ENCODE measurements at regions of chr15 and their contacts with region 1.

Region 1: DNA sequence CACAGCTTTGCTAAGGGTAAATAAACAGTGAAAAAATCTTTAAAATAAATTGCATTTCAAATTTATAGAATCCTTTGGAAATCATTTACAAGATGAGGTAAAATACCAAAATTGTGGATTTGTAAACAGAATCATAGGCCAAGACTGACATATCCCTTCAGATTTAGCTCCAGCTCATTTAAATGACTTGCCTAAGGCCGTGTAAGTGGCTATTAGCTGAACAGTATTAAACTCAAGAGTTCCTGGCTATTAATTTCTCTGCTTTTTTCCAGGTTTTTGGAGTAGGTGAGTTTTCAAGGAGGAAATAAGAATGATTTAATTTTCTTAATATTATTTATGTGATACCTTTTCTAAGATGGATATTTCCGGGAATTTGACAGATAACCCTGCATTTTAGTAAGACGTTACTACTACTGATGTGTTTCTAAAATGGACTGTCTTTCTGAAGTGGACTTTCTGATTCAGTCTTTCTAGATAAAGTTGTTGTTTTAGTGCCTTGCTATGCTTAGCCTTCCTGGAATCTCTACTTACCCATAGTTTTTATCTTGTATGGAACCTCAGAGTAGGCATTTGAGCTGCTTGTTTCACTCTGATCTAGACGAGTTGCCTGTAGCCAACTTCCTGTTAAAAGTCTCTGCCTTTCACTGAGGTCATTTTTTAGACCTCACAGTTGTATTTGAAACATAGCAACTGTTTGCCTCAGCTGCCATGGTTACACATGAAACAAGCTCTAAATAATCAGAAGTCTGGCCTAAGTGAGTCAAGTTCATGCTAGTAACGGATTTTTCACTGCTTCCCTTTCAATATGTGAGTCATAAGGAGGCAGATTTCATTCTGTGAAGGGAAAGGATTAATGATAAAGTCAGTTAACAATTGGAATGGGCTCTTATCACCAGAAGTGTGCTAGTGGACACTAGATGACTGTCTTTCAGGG is 127.0 kb downstream of the KLHL25 start:
- DNase-seq: peak in 11 of 14 experiments; percentile 15 to 95 (median 46)
- ATAC-seq: peak; percentile 94
- H3K4me3 ChIP-seq: no peak overlapping the region
- H3K4me3 Mint-ChIP-seq: peak overlapping the region; percentile 57
- H3K27ac ChIP-seq: peak overlapping the region; percentile 68 to 95
- H3K27ac Mint-ChIP-seq: peak overlapping the region; percentile 84
- H3K4me1 ChIP-seq: peaks cover 9% of the 10 kb centered on the region
- H3K4me1 Mint-ChIP-seq: peaks cover 22% of the 10 kb centered on the region
- H3K27me3 ChIP-seq: no peaks in the 10 kb centered on the region
- H3K27me3 Mint-ChIP-seq: no peaks in the 10 kb centered on the region
- CTCF ChIP-seq: no peak

Region 2: DNA sequence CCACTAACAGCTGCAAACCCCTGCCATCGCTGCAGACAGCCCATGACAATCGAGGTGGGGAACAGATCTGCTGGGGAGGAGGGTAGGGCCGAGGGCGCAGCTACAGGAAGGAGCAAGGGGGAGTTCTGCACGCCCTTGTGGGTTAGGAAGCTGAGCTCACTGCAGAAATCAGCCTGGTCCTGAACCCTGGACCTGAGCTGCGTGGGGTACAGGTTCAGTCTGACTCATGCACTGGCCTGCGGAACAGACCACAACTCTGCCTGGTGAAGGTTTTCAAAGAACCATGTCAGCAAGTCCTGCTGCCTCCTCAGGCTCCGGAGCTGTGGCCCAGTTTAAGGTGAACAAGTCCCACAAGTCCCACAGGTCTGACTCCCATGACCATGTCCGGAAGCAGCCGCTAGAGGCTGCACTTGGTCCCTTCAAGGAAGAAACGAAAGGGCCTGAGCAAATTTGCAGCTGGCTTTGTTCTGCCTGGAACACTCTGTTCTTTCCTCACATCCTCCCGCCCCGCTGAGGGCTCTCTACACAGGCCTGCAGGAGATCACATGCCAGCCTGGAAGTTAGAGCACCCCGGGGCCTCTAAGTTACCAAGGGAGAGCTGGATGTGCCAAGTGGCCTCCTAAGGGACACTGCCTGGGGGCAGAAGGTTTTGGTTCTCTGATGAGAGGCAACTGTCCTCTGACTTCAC is 336.7 kb before region 1 on chr15:
- CTCF ChIA-PET with region 1: no interaction called
- POLR2A ChIA-PET with region 1: no interaction called
- intact Hi-C with region 1: loop called in 1 of 2 experiments (anchors 5 kb)
- DNase-seq: peak; percentile 46 to 88 (median 60)
- ATAC-seq: peak; percentile 71
- H3K4me3 ChIP-seq: peak overlapping the region; percentile 47
- H3K4me3 Mint-ChIP-seq: peak overlapping the region; percentile 96
- H3K27ac ChIP-seq: peak overlapping the region; percentile 43 to 60
- H3K27ac Mint-ChIP-seq: peak overlapping the region; percentile 85
- H3K4me1 ChIP-seq: peaks cover 30% of the 10 kb centered on the region
- H3K4me1 Mint-ChIP-seq: peaks cover 58% of the 10 kb centered on the region
- H3K27me3 ChIP-seq: no peaks in the 10 kb centered on the region
- H3K27me3 Mint-ChIP-seq: no peaks in the 10 kb centered on the region
- CTCF ChIP-seq: peak; percentile 57

Region 3: DNA sequence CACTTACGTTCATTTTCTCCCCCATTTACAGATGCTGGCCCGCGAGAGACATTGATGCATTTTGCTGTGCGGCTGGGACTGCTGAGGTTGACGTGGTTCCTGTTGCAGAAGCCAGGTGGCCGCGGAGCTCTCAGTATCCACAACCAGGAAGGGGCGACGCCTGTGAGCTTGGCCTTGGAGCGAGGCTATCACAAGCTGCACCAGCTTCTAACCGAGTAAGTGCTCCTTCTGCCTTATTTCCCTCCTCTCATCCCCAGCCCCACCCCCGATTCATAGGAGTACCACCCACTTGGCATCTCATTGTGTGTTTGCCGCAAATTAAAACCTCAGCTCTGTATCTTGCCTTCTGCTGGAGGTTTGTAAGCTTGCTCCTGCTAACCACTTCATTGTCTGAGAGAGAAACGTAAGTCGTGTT is 124.0 kb before region 1 on chr15:
- CTCF ChIA-PET with region 1: no interaction called
- POLR2A ChIA-PET with region 1: no interaction called
- intact Hi-C with region 1: loop called in 1 of 2 experiments (anchors 5 kb)
- DNase-seq: peak in 13 of 14 experiments; percentile 5 to 72 (median 37)
- ATAC-seq: peak; percentile 90
- H3K4me3 ChIP-seq: peak overlapping the region; percentile 18
- H3K4me3 Mint-ChIP-seq: peak overlapping the region; percentile 52
- H3K27ac ChIP-seq: no peak overlapping the region
- H3K27ac Mint-ChIP-seq: peak overlapping the region; percentile 77
- H3K4me1 ChIP-seq: peaks cover 14% of the 10 kb centered on the region
- H3K4me1 Mint-ChIP-seq: peaks cover 82% of the 10 kb centered on the region
- H3K27me3 ChIP-seq: no peaks in the 10 kb centered on the region
- H3K27me3 Mint-ChIP-seq: no peaks in the 10 kb centered on the region
- CTCF ChIP-seq: peak; percentile 19

Region 4: DNA sequence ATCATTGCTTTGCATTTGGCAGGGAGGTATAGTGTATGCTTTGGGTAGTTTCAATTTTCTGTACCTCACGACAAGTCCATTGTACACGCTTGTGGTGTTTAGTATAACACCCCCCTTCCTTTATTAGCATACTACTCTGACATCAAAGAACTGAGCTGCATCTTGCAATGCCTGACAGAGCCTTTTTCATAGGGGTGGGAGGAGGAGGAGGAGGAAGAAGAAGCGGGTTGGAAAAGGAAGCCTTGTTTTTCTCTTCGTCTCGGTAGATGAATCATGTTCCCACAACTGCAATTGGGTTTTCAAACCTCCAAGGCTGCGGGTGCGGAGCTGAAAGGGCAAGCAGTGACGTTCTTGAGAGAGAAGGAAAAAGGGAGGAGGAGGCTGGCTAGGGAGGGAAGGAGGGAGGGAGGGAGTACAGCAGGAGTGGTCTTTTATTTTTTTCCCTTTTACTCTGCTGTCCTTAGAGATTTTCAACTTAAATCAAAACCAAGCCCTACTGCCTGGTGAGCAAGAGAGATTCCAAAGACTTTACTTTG is 48.7 kb before region 1 on chr15:
- CTCF ChIA-PET with region 1: interaction called, 4 read pairs
- POLR2A ChIA-PET with region 1: interaction called, 3 read pairs
- intact Hi-C with region 1: loop called (anchors 5 kb)
- DNase-seq: peak in 12 of 14 experiments; percentile 15 to 81 (median 42)
- ATAC-seq: peak; percentile 80
- H3K4me3 ChIP-seq: peak overlapping the region; percentile 39
- H3K4me3 Mint-ChIP-seq: no peak overlapping the region
- H3K27ac ChIP-seq: peak overlapping the region; percentile 26 to 65
- H3K27ac Mint-ChIP-seq: no peak overlapping the region
- H3K4me1 ChIP-seq: peaks cover 41% of the 10 kb centered on the region
- H3K4me1 Mint-ChIP-seq: peaks cover 41% of the 10 kb centered on the region
- H3K27me3 ChIP-seq: no peaks in the 10 kb centered on the region
- H3K27me3 Mint-ChIP-seq: no peaks in the 10 kb centered on the region
- CTCF ChIP-seq: no peak

Region 5: GRCh38 chr15:85646538-85647091 is 21.1 kb before region 1 on chr15:
- CTCF ChIA-PET with region 1: no interaction called
- POLR2A ChIA-PET with region 1: no interaction called
- intact Hi-C with region 1: no loop called
- DNase-seq: peak in 6 of 14 experiments; percentile 7 to 81 (median 48)
- ATAC-seq: peak; percentile 85
- H3K4me3 ChIP-seq: no peak overlapping the region
- H3K4me3 Mint-ChIP-seq: peak overlapping the region; percentile 9
- H3K27ac ChIP-seq: peak overlapping the region in 1 of 2 donors; percentile 71
- H3K27ac Mint-ChIP-seq: peak overlapping the region; percentile 73
- H3K4me1 ChIP-seq: peaks cover 40% of the 10 kb centered on the region
- H3K4me1 Mint-ChIP-seq: peaks cover 61% of the 10 kb centered on the region
- H3K27me3 ChIP-seq: no peaks in the 10 kb centered on the region
- H3K27me3 Mint-ChIP-seq: no peaks in the 10 kb centered on the region
- CTCF ChIP-seq: no peak

Region 6: GRCh38 chr15:85689729-85690128 is 22.0 kb after region 1 on chr15:
- CTCF ChIA-PET with region 1: interaction called, 3 read pairs
- POLR2A ChIA-PET with region 1: interaction called, 10 read pairs
- intact Hi-C with region 1: loop called in 1 of 2 experiments (anchors 1 kb)
- DNase-seq: peak; percentile 46 to 88 (median 60)
- ATAC-seq: peak; percentile 86
- H3K4me3 ChIP-seq: peak overlapping the region; percentile 66
- H3K4me3 Mint-ChIP-seq: peak overlapping the region; percentile 97
- H3K27ac ChIP-seq: peak overlapping the region; percentile 77 to 84
- H3K27ac Mint-ChIP-seq: peak overlapping the region; percentile 93
- H3K4me1 ChIP-seq: peaks cover 51% of the 10 kb centered on the region
- H3K4me1 Mint-ChIP-seq: peaks cover 76% of the 10 kb centered on the region
- H3K27me3 ChIP-seq: no peaks in the 10 kb centered on the region
- H3K27me3 Mint-ChIP-seq: no peaks in the 10 kb centered on the region
- CTCF ChIP-seq: peak; percentile 6

Region 7: GRCh38 chr15:85702321-85703101 is 34.8 kb after region 1 on chr15:
- CTCF ChIA-PET with region 1: interaction called, 3 read pairs
- POLR2A ChIA-PET with region 1: interaction called, 5 read pairs
- intact Hi-C with region 1: loop called (anchors 1 kb)
- DNase-seq: peak in 4 of 14 experiments; percentile 32 to 84 (median 78)
- ATAC-seq: peak; percentile 38
- H3K4me3 ChIP-seq: peak overlapping the region; percentile 27
- H3K4me3 Mint-ChIP-seq: peak overlapping the region; percentile 74
- H3K27ac ChIP-seq: peak overlapping the region; percentile 85 to 88
- H3K27ac Mint-ChIP-seq: peak overlapping the region; percentile 98
- H3K4me1 ChIP-seq: peaks cover 64% of the 10 kb centered on the region
- H3K4me1 Mint-ChIP-seq: peaks cover 80% of the 10 kb centered on the region
- H3K27me3 ChIP-seq: no peaks in the 10 kb centered on the region
- H3K27me3 Mint-ChIP-seq: no peaks in the 10 kb centered on the region
- CTCF ChIP-seq: no peak

Region 8: DNA sequence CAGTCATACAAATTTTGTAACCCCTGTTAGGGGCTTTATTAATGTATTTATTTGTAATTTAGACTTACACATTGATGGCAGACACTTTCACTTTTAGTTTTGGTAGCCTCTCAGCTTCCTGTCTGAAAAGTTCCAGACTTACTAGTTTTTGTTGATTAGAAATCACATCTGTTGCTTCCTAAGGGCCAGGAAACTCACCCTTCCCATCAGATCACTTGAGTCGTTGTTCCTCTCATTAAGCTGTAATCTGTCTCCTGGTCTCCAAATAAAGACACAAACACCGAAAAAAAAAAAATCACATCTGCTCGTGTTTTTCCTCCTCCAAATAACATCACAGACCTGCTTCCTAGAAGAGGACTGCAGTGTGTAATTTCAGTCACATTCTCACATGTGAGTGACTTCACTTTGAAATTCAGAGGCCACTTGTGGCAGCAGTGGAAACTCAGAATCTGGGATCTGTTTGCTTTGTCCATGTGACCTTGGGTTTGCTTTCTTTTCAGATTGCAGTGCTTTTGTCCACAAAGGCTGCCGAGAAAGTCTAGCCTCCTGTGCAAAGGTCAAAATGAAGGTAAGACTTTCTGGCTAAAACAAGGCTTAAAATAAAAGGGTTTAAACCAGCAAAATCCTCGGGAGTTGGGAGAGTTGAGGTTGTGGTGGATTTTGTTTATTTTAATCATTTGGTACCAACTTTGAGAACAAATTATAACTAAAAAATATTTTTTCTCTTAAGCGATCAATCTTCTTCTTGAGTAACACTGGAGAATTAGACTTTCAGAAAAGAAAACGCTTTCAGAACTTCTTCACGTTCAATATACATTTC is 40.0 kb after region 1 on chr15:
- CTCF ChIA-PET with region 1: interaction called, 3 read pairs
- POLR2A ChIA-PET with region 1: interaction called, 6 read pairs
- intact Hi-C with region 1: loop called (anchors 1 kb)
- DNase-seq: peak in 2 of 14 experiments; percentile 56 to 80
- ATAC-seq: peak; percentile 39
- H3K4me3 ChIP-seq: peak overlapping the region; percentile 45
- H3K4me3 Mint-ChIP-seq: peak overlapping the region; percentile 75
- H3K27ac ChIP-seq: peak overlapping the region; percentile 80 to 88
- H3K27ac Mint-ChIP-seq: peak overlapping the region; percentile 98
- H3K4me1 ChIP-seq: peaks cover 54% of the 10 kb centered on the region
- H3K4me1 Mint-ChIP-seq: peaks cover 87% of the 10 kb centered on the region
- H3K27me3 ChIP-seq: no peaks in the 10 kb centered on the region
- H3K27me3 Mint-ChIP-seq: no peaks in the 10 kb centered on the region
- CTCF ChIP-seq: no peak

Region 9: GRCh38 chr15:85813234-85813633 is 145.5 kb after region 1 on chr15:
- CTCF ChIA-PET with region 1: no interaction called
- POLR2A ChIA-PET with region 1: no interaction called
- intact Hi-C with region 1: no loop called
- DNase-seq: no peak
- ATAC-seq: no peak
- H3K4me3 ChIP-seq: no peak overlapping the region
- H3K4me3 Mint-ChIP-seq: no peak overlapping the region
- H3K27ac ChIP-seq: no peak overlapping the region
- H3K27ac Mint-ChIP-seq: no peak overlapping the region
- H3K4me1 ChIP-seq: no peaks in the 10 kb centered on the region
- H3K4me1 Mint-ChIP-seq: no peaks in the 10 kb centered on the region
- H3K27me3 ChIP-seq: no peaks in the 10 kb centered on the region
- H3K27me3 Mint-ChIP-seq: no peaks in the 10 kb centered on the region
- CTCF ChIP-seq: no peak